Motor neuron (in vitro differentiated cells): ENCODE measurements at regions of chr14 and their contacts with region 1.

Region 1: DNA sequence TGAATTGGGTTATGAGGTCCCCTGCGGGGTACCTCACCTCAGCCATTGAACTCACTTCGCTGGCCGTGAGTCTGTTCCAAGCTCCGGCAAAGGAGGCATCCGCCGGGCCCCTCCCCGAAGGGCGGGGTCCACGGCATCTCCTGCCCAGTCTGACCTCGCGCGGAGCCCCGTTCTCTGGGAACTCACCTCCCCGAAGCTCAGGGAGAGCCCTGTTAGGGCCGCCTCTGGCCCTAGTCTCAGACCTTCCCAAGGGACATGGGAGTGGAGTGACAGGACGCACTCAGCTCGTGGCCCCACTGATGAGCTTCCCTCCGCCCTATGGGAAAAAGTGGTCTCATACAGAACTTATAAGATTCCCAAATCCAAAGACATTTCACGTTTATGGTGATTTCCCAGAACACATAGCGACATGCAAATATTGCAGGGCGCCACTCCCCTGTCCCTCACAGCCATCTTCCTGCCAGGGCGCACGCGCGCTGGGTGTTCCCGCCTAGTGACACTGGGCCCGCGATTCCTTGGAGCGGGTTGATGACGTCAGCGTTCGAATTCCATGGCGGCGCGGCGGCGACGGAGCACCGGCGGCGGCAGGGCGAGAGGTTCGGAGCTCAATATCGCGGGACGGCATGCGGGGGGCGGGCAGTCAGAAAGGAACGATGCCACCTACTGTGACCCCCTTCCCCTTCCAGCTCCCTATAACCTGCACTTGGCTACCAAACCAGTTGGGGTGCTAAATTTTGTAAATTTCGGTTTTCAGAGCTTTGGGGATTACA is at the start of gene PARP2:
- ATAC-seq: peak; percentile 90 to 97 (median 96)
- H3K4me3 ChIP-seq: peak within 1 kb of the TSS; percentile 64 to 81 (median 68)
- H3K27ac ChIP-seq: peak within 1 kb of the TSS; percentile 79 to 81
- H3K4me1 ChIP-seq: peaks cover 4% of the 10 kb centered on the region in 2 donors
- total RNA-seq, gene PARP2: 9.4 to 55.4 (median 33.9) TPM

Region 2: DNA sequence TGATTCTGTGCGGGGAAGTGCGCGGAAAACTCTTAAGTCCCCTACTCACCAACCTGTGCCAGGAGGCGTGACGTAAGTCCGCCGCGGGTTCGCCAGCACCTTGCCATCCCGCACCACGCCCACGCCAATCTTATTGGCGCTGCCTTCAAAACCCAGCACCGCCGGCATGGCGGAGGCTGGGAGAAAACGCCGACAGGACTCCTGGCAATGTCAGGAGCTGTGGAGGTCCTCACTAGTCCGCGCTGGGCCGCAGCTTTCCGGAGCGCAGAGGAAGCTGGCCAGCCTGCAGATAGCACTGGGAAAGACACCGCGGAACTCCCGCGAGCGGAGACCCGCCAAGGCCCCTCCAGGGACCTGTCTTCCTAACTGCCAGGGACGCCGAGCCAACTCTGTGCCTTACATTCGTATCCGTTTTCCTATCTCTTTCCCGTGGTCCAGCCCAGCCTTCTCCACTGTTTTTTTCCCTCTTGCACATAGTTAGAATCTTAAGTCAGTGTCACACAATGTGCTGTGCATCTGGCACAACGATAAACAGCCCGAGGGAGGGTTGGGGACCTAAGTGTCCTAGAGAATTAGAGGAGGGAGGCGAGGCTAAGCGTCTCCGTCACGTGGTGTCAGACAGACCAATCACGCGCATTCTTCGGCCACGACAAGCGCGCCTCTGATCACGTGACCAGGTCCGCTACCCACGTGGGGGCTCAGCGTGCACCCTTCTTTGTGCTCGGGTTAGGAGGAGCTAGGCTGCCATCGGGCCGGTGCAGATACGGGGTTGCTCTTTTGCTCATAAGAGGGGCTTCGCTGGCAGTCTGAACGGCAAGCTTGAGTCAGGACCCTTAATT is 111.5 kb after region 1 on chr14 and contains the starts of genes APEX1 and OSGEP:
- in situ Hi-C with region 1: loop called in 2 of 9 experiments (anchors 25 kb)
- ATAC-seq: peak; percentile 80 to 90 (median 88)
- H3K4me3 ChIP-seq: peak within 1 kb of the TSS; percentile 57 to 97 (median 67)
- H3K27ac ChIP-seq: peak within 1 kb of the TSS; percentile 98 to 99
- H3K4me1 ChIP-seq: peaks cover 10 to 12% of the 10 kb centered on the region in 2 donors
- total RNA-seq, gene APEX1: 125 to 320 (median 161) TPM
- total RNA-seq, gene OSGEP: 16.3 to 44.4 (median 29.4) TPM

Region 3: GRCh38 chr14:20613094-20614037 is 270.1 kb after region 1 on chr14:
- in situ Hi-C with region 1: loop called in 4 of 9 experiments (anchors 25 kb)
- ATAC-seq: peak; percentile 76 to 87 (median 84)
- H3K4me3 ChIP-seq: peak overlapping the region; percentile 38 to 50 (median 46)
- H3K27ac ChIP-seq: no peak overlapping the region
- H3K4me1 ChIP-seq: peaks cover 0 to 6% of the 10 kb centered on the region in 2 donors

Region 4: DNA sequence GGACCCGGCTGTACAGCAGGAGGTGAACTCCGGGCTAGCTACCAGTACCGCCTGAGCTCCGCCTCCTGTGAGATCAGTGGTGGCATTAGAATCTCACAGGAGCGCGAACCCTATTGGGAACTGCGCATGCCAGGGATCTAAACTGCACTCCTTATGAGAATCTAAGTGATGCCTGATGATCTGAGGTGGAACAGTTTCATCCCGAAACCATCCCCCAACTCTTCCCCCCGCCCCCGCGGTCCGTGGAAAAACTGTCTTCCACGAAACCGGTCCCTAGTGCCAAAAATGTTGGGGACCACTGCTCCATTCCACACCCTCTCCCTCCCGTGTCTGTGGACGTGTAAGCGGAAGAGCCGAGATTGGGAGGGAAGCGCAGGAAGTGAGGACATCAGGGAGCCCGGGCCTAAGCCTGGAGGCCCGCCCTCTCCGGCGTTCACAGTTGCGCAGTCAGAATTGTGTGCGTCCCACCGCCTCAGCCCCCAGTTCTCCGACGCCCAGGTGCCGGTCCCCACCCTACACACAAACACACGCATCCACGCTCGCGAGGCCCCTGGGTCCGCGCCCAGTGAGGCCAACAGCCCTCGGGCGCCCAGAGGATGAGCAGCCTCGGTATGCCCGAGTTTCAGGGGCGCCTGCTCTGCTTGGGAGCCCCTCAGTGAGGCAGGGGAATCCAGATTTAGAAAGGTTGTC is 339.3 kb after region 1 on chr14:
- in situ Hi-C with region 1: loop called in 2 of 9 experiments (anchors 25 kb)
- ATAC-seq: peak; percentile 59 to 85 (median 82)
- H3K4me3 ChIP-seq: peak overlapping the region; percentile 70 to 96 (median 85)
- H3K27ac ChIP-seq: peak overlapping the region; percentile 97 to 98
- H3K4me1 ChIP-seq: peaks cover 0 to 2% of the 10 kb centered on the region in 2 donors